ENCODE measurements at regions of chr7 and their contacts with region 1.

Region 1: GRCh38 chr7:131068604-131069021 is 259.1 kb upstream of the MKLN1 start:
- DNase-seq: no peak
- H3K4me3 ChIP-seq: no peak overlapping the region
- H3K4me3 Mint-ChIP-seq: no peak overlapping the region
- H3K27ac Mint-ChIP-seq: no peak overlapping the region
- H3K4me1 ChIP-seq: peaks cover 5% of the 10 kb centered on the region; the same call in 1 of the 2 replicates
- H3K4me1 Mint-ChIP-seq: peaks cover 8% of the 10 kb centered on the region
- H3K27me3 ChIP-seq: no peaks in the 10 kb centered on the region
- H3K27me3 Mint-ChIP-seq: no peaks in the 10 kb centered on the region
- CTCF ChIP-seq: no peak

Region 2: DNA sequence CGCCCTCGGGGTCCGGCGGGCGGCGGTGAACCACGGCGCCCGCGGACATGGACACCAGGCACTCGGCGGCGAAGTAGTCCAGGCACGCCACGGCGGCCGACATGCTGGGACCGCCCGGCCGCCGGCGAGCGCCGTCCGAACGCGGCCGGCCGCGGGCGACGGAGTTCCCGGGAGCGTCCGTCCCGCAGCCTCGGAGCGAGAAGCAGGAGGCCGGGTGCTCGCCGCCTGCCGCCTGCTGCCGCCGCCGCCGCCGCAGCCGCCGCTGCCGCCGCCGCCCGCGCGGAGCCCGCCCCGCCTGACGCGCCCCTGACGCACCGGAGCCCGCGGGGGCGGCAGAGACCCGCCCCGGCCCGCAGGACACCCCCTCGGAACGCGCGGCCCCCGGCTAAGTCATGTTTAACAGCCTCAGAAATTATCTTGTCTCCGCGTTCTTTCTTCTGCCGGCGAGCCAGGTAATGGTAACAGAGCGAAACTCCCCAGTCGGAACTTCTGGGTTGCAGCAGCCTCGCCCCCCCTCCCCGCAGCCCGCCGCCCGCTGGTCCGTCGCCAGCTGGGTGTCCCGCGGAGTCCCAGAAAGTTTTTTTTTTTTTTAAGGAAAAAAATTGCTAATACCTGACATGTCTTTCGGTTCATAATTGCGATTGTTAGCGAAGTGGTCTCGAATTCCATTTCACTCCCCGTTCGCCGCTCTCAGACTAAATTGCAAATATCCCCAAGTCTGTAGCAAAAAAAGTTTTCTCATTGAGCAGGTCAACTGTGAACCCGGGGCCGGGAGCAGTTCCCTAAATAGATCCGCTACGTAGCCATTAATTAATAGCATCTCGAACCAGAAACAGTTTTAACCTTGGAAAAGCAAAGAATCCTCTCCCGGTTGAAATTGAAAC is 334.4 kb before region 1 on chr7 and contains the start of gene KLF14:
- CTCF ChIA-PET with region 1: no interaction called
- POLR2A ChIA-PET with region 1: no interaction called
- intact Hi-C with region 1: no loop called
- DNase-seq: peak in 1 of 2 experiments; percentile 46
- H3K4me3 ChIP-seq: peak within 1 kb of the TSS; percentile 71
- H3K4me3 Mint-ChIP-seq: peak within 1 kb of the TSS; percentile 74
- H3K27ac Mint-ChIP-seq: no peak within 1 kb of the TSS
- H3K4me1 ChIP-seq: peaks cover 5% of the 10 kb centered on the region; the same call in 1 of the 2 replicates
- H3K4me1 Mint-ChIP-seq: no peaks in the 10 kb centered on the region
- H3K27me3 ChIP-seq: 0 out of 2 replicates have a peak, but pooled peaks cover 2% of the 10 kb centered on the region
- H3K27me3 Mint-ChIP-seq: peaks cover 28% of the 10 kb centered on the region
- CTCF ChIP-seq: peak in 1 of 2 experiments; percentile 1
- total RNA-seq, gene KLF14: 0.14 TPM in 1 of 2 replicates, not detected in the other

Region 3: GRCh38 chr7:131107337-131108211 is 39.0 kb after region 1 on chr7:
- CTCF ChIA-PET with region 1: interaction called, 5 read pairs
- POLR2A ChIA-PET with region 1: no interaction called
- intact Hi-C with region 1: loop called (anchors 5 kb)
- DNase-seq: peak; percentile 49 to 59
- H3K4me3 ChIP-seq: peak overlapping the region; percentile 73
- H3K4me3 Mint-ChIP-seq: peak overlapping the region; percentile 79
- H3K27ac Mint-ChIP-seq: peak overlapping the region; percentile 87
- H3K4me1 ChIP-seq: peaks cover 20% of the 10 kb centered on the region
- H3K4me1 Mint-ChIP-seq: peaks cover 15% of the 10 kb centered on the region
- H3K27me3 ChIP-seq: 0 out of 2 replicates have a peak, but pooled peaks cover 1% of the 10 kb centered on the region
- H3K27me3 Mint-ChIP-seq: peaks cover 7% of the 10 kb centered on the region
- CTCF ChIP-seq: peak in 1 of 2 experiments; percentile 4

Region 4: DNA sequence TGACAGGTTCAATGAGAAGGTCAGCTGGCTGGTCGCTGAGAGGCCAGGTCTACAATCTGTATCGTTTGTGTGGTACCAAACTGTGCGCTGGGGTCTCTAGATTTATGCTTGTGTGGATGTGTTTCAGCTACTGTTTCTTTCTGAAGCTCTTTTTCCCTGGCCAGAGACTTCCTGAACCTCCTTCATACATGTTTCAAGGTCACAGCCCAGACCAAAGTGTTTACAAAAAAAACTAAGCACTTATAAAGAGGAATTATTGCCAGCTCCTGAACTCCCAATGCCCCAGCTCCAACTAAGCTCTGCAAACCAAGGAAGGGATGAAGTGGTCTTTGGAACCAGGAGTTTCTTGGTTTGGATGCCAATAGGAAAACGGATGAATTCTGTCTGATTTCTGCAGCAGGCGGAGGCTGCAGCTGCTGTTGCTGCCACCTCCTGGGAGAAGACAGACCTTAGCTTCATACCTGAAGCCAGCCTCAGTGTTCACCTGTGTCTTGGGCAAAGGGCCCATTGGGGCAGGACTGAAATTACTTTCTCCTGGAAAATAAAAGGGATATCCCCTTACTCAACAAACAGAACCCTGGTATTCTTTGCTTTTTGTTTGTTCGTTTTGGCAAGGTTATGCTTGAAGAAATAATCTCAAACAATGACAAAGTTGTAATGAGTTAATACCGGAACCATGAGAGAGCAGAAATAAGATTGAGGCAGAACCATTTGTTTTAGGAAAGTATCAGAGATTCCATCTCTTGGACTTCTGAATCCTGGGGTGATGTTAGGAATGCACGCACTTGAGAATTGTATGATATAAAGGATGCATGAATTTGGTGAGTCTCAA is 234.5 kb after region 1 on chr7:
- CTCF ChIA-PET with region 1: interaction called, 8 read pairs
- POLR2A ChIA-PET with region 1: no interaction called
- intact Hi-C with region 1: loop called (anchors 1 kb)
- DNase-seq: peak; percentile 47 to 51
- H3K4me3 ChIP-seq: no peak overlapping the region
- H3K4me3 Mint-ChIP-seq: no peak overlapping the region
- H3K27ac Mint-ChIP-seq: no peak overlapping the region
- H3K4me1 ChIP-seq: no peaks in the 10 kb centered on the region
- H3K4me1 Mint-ChIP-seq: peaks cover 10% of the 10 kb centered on the region
- H3K27me3 ChIP-seq: no peaks in the 10 kb centered on the region
- H3K27me3 Mint-ChIP-seq: no peaks in the 10 kb centered on the region
- CTCF ChIP-seq: peak; percentile 46 to 58

Region 5: GRCh38 chr7:131424219-131424822 is 355.7 kb after region 1 on chr7:
- CTCF ChIA-PET with region 1: no interaction called
- POLR2A ChIA-PET with region 1: no interaction called
- intact Hi-C with region 1: loop called (anchors 1 kb)
- DNase-seq: no peak
- H3K4me3 ChIP-seq: no peak overlapping the region
- H3K4me3 Mint-ChIP-seq: no peak overlapping the region
- H3K27ac Mint-ChIP-seq: no peak overlapping the region
- H3K4me1 ChIP-seq: no peaks in the 10 kb centered on the region
- H3K4me1 Mint-ChIP-seq: peaks cover 12% of the 10 kb centered on the region
- H3K27me3 ChIP-seq: no peaks in the 10 kb centered on the region
- H3K27me3 Mint-ChIP-seq: no peaks in the 10 kb centered on the region
- CTCF ChIP-seq: peak; percentile 41 to 51

Region 6: DNA sequence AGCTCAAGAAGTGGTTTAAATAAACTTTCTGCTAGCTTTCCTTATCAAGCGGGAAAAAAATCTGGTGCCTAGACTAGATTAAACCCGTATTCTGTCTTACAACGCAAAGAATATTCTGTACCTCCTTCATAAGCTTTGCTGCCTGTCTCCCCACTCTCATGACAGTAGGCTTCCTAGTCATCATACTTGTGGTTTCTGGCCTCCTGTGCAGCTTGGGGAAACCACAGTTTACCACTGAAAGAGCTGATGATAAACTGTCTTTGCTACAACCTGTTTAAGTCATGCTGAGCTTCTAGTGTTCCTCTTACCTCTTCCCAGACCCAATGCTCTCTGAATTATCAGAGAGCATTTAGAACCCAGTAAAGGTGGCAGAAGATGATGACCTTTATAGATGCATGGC is 432.8 kb after region 1 on chr7:
- CTCF ChIA-PET with region 1: no interaction called
- POLR2A ChIA-PET with region 1: no interaction called
- intact Hi-C with region 1: loop called (anchors 5 kb)
- DNase-seq: no peak
- H3K4me3 ChIP-seq: no peak overlapping the region
- H3K4me3 Mint-ChIP-seq: no peak overlapping the region
- H3K27ac Mint-ChIP-seq: no peak overlapping the region
- H3K4me1 ChIP-seq: 0 out of 2 replicates have a peak, but pooled peaks cover 3% of the 10 kb centered on the region
- H3K4me1 Mint-ChIP-seq: peaks cover 7% of the 10 kb centered on the region
- H3K27me3 ChIP-seq: no peaks in the 10 kb centered on the region
- H3K27me3 Mint-ChIP-seq: no peaks in the 10 kb centered on the region
- CTCF ChIP-seq: no peak